ENCODE measurements at regions of chr1 and their contacts with region 1.

Region 1: DNA sequence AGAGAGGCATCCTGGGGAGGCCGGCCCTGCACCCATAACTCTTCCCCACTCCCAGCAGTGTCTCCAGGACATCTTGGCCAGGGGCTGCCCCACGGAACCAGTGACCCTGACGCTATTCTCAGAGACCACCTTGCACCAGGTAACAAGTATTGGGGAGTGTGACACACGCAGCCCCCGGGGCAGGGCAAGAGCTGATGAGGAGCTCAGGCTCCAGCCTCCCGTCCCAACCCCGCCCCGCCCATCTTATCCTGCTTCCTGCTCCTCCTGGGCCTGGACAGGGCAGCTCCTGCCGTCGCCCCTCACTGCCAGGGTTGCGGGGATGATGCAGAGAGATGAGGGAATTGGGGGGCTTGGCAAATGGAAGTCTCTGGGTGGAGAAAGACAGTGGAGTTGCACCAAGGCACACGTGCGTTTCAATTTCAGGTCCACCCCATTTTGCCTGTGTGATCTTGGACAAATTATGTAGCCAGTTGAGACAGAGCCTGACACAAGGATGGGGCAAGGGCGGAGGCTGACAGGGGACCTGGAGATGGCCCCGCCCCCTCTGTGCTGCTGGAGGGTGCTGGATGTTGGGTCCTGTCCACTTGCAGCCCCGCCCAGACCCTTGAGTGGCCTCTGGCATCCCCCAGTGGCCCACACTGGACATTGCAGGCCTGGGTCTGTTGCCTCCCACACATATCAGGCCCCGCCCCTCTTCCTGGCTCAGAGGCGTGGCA is 10.7 kb downstream of the CLCNKA start:
- DNase-seq: peak; percentile 88
- H3K4me3 ChIP-seq: no peak overlapping the region
- H3K27ac ChIP-seq: no peak overlapping the region
- H3K4me1 ChIP-seq: no peaks in the 10 kb centered on the region
- H3K27me3 ChIP-seq: no peaks in the 10 kb centered on the region
- CTCF ChIP-seq: peak; percentile 86 to 94
- POLR2A ChIP-seq: no peak

Region 2: DNA sequence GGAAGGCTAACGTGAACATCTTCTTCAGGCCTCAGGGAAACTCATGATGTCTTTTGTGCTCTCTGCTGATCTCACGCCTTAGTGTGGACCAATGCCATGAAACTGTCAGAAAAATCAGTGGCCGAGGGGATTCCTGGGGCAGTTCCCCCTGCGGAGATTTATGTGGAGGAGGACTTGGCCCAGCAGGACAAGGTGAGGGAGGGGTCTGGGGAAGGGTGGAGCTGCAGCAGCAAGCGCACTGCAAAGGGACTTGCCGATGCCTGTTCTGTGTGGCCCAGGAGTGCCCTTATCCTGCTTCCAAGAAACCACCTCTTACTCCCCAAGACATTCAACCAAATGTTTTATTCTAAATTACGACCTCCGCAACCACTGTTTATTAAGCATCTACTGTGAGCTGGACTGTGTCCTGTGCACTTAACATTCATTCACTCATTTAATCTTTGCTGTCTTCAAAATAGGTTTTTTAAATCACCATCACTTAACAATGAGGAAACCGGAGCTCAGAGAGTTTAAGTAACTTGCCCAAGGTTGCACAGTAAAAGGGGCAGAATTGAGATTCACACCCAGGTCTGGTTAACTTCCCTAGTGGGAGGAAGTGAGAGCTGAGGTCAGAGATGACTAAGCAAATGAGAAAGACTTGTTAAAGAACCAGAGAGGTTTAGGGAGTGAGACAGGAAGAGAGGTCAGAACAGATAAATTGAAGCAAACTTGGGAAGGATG is 735.8 kb before region 1 on chr1:
- CTCF ChIA-PET with region 1: no interaction called
- POLR2A ChIA-PET with region 1: no interaction called
- dilution Hi-C with region 1: no loop called
- intact Hi-C with region 1: no loop called
- DNase-seq: no peak
- H3K4me3 ChIP-seq: no peak overlapping the region
- H3K27ac ChIP-seq: no peak overlapping the region
- H3K4me1 ChIP-seq: no peaks in the 10 kb centered on the region
- H3K27me3 ChIP-seq: peaks cover 0 to 2% of the 10 kb centered on the region in 2 experiments
- CTCF ChIP-seq: no peak
- POLR2A ChIP-seq: no peak

Region 3: GRCh38 chr1:15902882-15903281 is 129.7 kb before region 1 on chr1:
- CTCF ChIA-PET with region 1: no interaction called
- POLR2A ChIA-PET with region 1: no interaction called
- dilution Hi-C with region 1: no loop called
- intact Hi-C with region 1: no loop called
- DNase-seq: no peak
- H3K4me3 ChIP-seq: no peak overlapping the region
- H3K27ac ChIP-seq: no peak overlapping the region
- H3K4me1 ChIP-seq: peaks cover 5% of the 10 kb centered on the region
- H3K27me3 ChIP-seq: no peaks in the 10 kb centered on the region
- CTCF ChIP-seq: no peak
- POLR2A ChIP-seq: no peak

Region 4: GRCh38 chr1:15994590-15995351 is 37.8 kb before region 1 on chr1:
- CTCF ChIA-PET with region 1: no interaction called
- POLR2A ChIA-PET with region 1: no interaction called
- dilution Hi-C with region 1: no loop called
- intact Hi-C with region 1: no loop called
- DNase-seq: peak; percentile 71
- H3K4me3 ChIP-seq: no peak overlapping the region
- H3K27ac ChIP-seq: no peak overlapping the region
- H3K4me1 ChIP-seq: no peaks in the 10 kb centered on the region
- H3K27me3 ChIP-seq: peaks cover 0 to 2% of the 10 kb centered on the region in 2 experiments
- CTCF ChIP-seq: peak; percentile 88 to 96
- POLR2A ChIP-seq: no peak

Region 5: GRCh38 chr1:16055613-16056520 is 23.3 kb after region 1 on chr1:
- CTCF ChIA-PET with region 1: interaction called, 6 read pairs
- POLR2A ChIA-PET with region 1: no interaction called
- dilution Hi-C with region 1: no loop called
- intact Hi-C with region 1: loop called (anchors 1 kb)
- DNase-seq: peak; percentile 78
- H3K4me3 ChIP-seq: no peak overlapping the region
- H3K27ac ChIP-seq: no peak overlapping the region
- H3K4me1 ChIP-seq: no peaks in the 10 kb centered on the region
- H3K27me3 ChIP-seq: peaks cover 0 to 4% of the 10 kb centered on the region in 2 experiments
- CTCF ChIP-seq: peak; percentile 77 to 95
- POLR2A ChIP-seq: no peak